Gastrocnemius medialis (tissue), 4 donors: ENCODE measurements at regions of chr4 and their contacts with region 1.

Region 1: GRCh38 chr4:10554694-10555093 is 97.5 kb upstream of the ZNF518B start:
- DNase-seq: peak in 1 of 2 donors; percentile 15
- ATAC-seq: peak; percentile 36 to 41
- H3K4me3 ChIP-seq: no peak overlapping the region
- H3K27ac ChIP-seq: no peak overlapping the region
- H3K4me1 ChIP-seq: no peaks in the 10 kb centered on the region
- H3K27me3 ChIP-seq: peaks cover 0 to 4% (median 0%) of the 10 kb centered on the region in 3 donors
- CTCF ChIP-seq: peak; percentile 33 to 61 (median 46)
- POLR2A ChIP-seq: no peak

Region 2: DNA sequence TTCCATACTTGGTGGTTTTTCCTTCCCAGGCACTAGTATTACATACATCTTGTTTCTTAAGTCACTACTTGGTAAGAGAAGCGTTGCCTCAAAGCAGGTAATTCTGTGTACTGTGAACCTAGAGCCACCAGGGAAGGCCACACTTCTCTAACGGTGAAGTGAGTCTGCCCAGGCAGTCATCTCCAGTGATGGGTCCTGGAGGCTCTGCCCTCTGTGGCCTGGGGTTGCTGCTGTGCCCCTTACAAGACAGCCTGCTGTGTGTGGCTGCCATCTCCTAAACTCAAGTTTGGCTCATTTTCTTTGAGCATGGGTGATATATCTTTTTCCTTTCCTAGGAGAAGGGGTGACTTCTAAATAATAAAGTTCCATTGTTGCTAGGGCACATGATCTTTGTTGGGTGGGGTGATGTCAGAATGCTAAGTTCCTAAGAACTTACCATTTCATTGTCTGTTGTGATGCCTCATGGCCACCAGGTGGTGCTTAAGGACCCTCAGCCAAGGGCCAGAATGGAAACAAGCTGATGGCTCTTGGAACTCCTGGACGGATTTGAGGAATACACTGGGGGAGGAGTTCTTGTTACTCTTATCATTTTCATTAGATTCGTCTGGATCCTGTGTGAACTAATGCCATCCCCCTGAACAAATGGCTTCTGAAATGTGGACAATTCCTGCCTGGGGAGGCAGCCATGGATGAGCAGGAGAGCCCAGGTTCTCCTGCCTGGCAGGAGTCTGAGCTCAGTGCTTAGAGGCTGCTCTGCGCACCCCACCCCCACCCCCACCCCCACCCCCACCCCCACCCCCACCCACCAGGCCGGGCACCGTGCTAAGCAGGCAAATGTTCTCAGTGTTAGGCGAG is 397.0 kb before region 1 on chr4:
- in situ Hi-C with region 1: loop called (anchors 5 to 10 kb)
- intact Hi-C with region 1: loop called (anchors 5 kb)
- DNase-seq: peak in 1 of 2 donors; percentile 29
- ATAC-seq: peak; percentile 66 to 76
- H3K4me3 ChIP-seq: no peak overlapping the region
- H3K27ac ChIP-seq: no peak overlapping the region
- H3K4me1 ChIP-seq: no peaks in the 10 kb centered on the region
- H3K27me3 ChIP-seq: no peaks in the 10 kb centered on the region
- CTCF ChIP-seq: peak; percentile 64 to 80 (median 73)
- POLR2A ChIP-seq: no peak

Region 3: DNA sequence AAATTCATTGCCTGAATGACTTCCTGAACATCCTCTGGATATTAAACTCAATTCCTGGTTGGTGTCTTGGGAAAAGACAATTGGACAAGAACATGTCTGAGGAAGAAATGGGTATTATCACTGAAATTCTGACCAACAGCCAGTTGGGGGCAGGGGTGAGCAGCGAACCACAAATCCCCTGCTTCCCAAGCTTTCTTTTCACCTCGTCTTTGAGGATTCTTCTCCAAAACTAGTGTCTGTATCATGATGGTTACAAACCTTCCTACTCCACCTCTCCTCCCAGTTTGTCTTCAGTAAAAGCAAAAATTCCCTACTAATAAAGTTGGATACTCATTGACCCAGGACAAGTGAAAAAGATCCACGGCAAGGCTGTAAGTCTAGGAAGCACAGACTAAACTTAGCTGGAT is 389.8 kb before region 1 on chr4:
- in situ Hi-C with region 1: loop called in 3 of 4 experiments (anchors 5 to 10 kb)
- intact Hi-C with region 1: loop called (anchors 5 kb)
- DNase-seq: no peak
- ATAC-seq: no peak
- H3K4me3 ChIP-seq: no peak overlapping the region
- H3K27ac ChIP-seq: no peak overlapping the region
- H3K4me1 ChIP-seq: peaks cover 0 to 5% of the 10 kb centered on the region in 2 donors
- H3K27me3 ChIP-seq: no peaks in the 10 kb centered on the region
- CTCF ChIP-seq: peak in 4 of 5 experiments; percentile 31 to 50 (median 44)
- POLR2A ChIP-seq: no peak

Region 4: DNA sequence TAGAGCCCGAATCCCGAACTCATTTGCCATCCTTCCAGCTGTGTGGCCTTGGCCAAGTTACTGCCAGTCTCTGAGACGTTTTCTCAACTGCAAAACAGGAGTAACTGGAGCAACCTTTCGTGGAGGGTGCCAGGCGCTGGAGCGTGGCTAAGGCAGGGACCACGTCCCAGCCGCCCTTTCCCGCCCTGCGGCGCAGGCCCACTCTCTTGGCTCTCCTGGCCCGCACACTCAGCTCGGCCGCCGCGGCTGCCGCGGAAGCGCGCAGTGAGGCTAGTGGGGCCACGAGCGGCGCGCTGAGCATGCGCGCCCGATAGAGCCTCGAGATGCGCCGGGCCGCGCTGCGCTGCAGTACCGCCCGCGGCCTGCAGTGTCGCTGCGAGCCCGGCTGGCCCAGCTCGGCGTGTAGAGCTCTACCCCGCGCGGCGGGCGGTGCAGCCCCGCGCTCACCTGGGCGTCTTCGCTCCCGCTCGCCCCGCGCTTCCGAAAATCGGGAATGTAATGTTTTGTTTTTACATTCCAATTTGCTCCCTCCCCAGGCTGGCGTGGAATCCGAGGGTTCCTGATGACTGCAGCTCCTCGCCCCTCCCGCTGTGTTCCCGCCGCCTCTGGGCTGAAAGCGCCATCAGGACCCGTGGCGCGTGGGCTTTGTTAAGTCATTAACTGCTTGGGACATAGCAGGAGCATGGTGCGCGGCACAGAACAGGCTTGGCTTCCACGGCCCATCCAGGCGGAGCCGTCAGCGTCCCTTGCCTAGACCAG is 93.4 kb before region 1 on chr4:
- in situ Hi-C with region 1: no loop called
- intact Hi-C with region 1: loop called (anchors 5 kb)
- DNase-seq: no peak
- ATAC-seq: peak in 1 of 2 donors; percentile 34
- H3K4me3 ChIP-seq: peak overlapping the region; percentile 14 to 47 (median 34)
- H3K27ac ChIP-seq: no peak overlapping the region
- H3K4me1 ChIP-seq: no peaks in the 10 kb centered on the region
- H3K27me3 ChIP-seq: peaks cover 31 to 32% (median 31%) of the 10 kb centered on the region in 3 donors
- CTCF ChIP-seq: peak; percentile 57 to 88 (median 76)
- POLR2A ChIP-seq: no peak

Region 5: DNA sequence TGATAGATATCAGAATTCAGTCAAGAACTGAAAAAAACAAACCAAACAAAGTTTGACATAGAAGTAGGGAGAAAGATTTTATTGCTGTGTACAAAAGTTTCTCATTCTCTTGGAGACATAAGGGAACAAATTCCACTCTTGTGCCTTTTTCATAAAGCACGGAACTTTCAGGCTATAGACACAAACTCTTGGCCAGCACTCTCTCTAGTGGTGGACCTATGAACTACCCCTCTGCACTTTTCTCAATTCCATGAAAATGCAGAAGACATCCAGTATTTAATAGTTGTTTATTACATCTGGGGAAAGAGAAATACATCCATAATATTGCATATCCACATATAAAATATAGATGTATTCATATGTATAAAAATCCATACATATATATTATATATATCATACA is 1165.6 kb after region 1 on chr4:
- in situ Hi-C with region 1: loop called in 1 of 4 experiments (anchors 25 kb)
- intact Hi-C with region 1: no loop called
- DNase-seq: no peak
- ATAC-seq: no peak
- H3K4me3 ChIP-seq: no peak overlapping the region
- H3K27ac ChIP-seq: no peak overlapping the region
- H3K4me1 ChIP-seq: no peaks in the 10 kb centered on the region
- H3K27me3 ChIP-seq: no peaks in the 10 kb centered on the region
- CTCF ChIP-seq: peak in 2 of 5 experiments; percentile 31 to 42
- POLR2A ChIP-seq: no peak